Posterior cingulate gyrus (tissue), 11 donors: ENCODE measurements at regions of chr6 and their contacts with region 1.

Region 1: DNA sequence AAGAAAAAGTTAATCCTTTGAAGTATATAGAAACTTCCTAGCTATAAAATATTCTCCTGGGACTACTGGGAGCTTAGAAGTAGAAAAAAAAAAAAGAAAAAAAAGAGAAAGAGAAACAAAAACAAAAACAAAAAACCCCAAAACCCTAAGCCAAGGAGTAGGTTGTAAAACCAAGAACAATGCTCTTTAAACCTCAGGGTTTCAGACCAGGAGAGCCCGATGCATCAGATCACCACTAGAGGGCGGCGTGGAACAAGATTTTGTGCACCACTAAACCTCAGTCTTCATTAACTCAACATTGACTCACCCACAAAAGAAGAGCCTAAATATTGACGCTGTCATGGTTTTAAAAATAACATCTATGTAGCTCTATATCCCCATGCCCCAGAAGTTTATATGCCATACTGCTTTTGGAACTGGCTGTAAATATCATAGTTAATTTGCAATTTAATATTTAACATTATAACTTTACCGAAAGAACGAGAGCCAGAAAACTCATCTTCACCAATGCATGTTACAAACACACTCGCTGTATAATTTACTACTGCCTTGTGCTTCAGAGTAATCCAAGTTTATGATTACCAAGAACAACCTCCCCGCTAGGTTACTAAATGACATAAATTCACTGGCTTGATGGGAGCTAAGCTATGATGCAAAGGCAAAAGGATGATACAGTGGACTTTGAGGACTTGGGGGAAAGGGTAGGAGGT is 19.2 kb downstream of the MCUR1 start:
- DNase-seq: peak; percentile 59 to 96 (median 85)

Region 2: DNA sequence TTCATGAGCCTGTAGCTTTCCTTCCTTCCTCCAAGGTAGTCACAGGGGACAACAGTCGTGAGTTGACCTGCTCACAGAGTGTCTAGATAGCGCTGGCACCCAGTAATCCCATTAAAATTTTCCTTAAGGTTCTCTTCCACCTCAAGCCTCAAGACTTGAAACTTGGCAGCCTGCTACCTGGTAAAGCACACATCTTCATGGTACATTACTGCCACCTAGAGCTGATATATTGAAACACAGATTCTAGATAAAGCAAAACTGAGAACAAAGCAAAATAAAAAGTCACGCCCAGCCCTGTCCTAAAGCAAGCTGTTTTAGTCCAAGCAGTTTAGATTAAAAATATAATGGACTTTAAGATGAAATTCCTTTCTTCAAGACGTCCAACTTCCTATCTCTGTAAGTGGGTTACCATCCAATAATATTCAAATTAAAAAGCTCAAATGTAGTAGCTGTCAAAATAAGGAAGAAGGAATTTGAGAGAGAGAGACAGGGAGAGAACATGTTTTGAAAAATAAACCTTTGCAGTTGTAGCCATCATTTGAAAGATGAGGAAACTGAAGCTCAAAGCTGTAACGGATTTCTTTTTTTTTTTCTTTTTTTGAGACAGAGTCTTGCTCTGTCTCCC is 271.7 kb after region 1 on chr6:
- intact Hi-C with region 1: loop called (anchors 10 kb)
- DNase-seq: no peak